ENCODE measurements at regions of chr11 and their contacts with region 1.

Region 1: GRCh38 chr11:67262731-67263675 is 3.3 kb upstream of the GRK2 start:
- DNase-seq: peak; percentile 88
- ATAC-seq: peak; percentile 81
- H3K4me3 ChIP-seq: no peak overlapping the region
- H3K27ac ChIP-seq: peak overlapping the region; percentile 47
- H3K4me1 ChIP-seq: peaks cover 36% of the 10 kb centered on the region
- H3K27me3 ChIP-seq: no peaks in the 10 kb centered on the region
- CTCF ChIP-seq: peak; percentile 83

Region 2: GRCh38 chr11:67195971-67196456 is 67.0 kb before region 1 on chr11:
- intact Hi-C with region 1: no loop called
- DNase-seq: no peak
- ATAC-seq: peak; percentile 32
- H3K4me3 ChIP-seq: no peak overlapping the region
- H3K27ac ChIP-seq: no peak overlapping the region
- H3K4me1 ChIP-seq: peaks cover 3% of the 10 kb centered on the region
- H3K27me3 ChIP-seq: no peaks in the 10 kb centered on the region
- CTCF ChIP-seq: no peak

Region 3: GRCh38 chr11:67317205-67317887 is 54.3 kb after region 1 on chr11:
- intact Hi-C with region 1: loop called (anchors 5 kb)
- DNase-seq: peak; percentile 98
- ATAC-seq: peak; percentile 94
- H3K4me3 ChIP-seq: peak overlapping the region; percentile 78
- H3K27ac ChIP-seq: peak overlapping the region; percentile 92
- H3K4me1 ChIP-seq: peaks cover 17% of the 10 kb centered on the region
- H3K27me3 ChIP-seq: no peaks in the 10 kb centered on the region
- CTCF ChIP-seq: peak; percentile 94